Posterior vena cava (tissue), 2 donors: ENCODE measurements at regions of chr5 and their contacts with region 1.

Region 1: DNA sequence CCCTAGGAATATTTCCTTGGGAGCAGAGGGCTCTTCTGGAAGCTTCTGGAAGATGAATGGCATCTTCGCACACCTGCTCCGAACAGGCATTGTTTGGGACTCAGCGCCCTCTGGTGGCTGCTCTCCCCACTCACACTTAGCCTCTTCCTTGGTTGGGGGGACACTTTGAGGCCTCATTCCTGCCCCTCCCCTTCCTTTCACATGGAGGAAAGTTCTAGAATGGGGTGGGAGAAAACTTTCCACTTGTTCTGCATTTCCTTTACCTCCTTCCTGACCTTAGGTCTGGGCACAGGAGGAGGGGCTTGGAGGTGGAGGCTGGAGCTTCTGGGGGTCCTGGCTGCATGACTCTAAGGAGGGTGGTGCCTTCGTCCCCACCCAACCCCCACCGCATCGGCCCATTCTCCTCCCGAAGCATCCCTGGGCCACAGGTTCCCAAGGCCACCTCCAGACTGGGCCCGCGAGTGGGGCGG is 19.3 kb upstream of the SMIM32 start:
- DNase-seq: no peak

Region 2: DNA sequence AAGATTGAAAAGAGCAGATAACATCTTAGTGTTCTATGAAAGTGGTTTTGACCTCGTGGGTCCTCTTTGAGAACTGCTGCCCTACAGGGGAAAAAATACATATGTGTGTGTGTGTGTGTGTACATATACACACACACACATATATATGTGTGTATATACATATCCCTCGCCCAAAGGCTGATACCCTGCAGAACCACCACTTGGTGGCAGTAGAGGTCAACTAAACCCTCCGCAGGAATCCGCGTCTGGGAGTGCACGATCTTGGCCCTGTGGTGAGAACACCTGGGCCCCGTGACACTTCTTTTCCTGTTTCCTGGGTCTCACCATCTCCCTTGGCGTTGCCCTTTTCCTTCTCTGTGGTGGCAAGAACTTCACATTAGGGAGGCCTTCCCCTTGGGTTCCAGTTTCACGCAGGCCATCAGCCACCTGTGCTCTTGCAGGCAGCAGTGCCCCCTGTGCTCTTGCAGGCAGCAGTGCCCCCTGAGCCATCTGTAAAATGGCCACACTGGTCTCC is 324.9 kb before region 1 on chr5:
- intact Hi-C with region 1: loop called (anchors 5 kb)
- DNase-seq: no peak

Region 3: DNA sequence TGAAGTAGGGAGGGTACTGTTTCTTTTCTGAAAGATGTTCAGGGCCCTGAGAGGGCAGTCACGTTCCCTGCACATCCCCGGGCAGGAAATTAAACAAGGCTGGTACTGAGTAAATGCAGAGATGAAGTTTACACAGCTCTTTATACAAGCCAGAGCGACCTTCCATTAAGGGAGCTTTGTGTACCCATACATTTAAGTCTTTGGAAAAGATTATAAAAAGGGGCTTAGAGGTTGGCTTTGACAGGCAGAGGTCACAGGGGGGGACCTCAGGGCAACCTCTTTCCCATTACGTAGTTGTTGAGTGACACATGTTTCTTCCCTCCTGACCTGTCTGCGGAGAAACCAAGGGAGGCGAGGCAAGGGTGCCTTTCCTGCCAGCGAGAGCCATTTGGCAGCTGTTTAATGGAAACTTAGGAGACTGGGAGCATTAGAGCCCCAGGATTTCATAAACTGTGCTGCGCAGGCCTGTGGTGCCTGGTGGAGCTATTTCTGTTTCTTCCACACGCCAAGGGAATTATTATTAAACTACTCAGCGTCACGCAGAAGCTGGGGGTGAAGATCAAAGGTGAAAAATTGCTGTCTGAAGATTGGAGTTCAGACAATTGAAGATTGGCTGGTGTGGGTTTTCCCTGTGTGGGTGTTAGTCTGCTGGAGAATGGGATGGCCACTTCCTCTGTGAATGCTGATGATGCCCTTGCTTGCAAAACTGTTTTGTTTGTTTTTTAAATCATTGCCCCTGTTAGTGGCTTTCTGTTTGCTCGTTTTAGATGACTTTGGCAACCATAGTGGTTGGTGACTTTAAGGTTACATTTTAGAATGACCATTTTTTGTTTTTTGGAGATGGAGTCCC is 16.1 kb before region 1 on chr5:
- intact Hi-C with region 1: loop called in 1 of 2 experiments (anchors 1 kb)
- DNase-seq: no peak